GM10248 (cell line): ENCODE measurements at regions of chr16 and their contacts with region 1.

Region 1: DNA sequence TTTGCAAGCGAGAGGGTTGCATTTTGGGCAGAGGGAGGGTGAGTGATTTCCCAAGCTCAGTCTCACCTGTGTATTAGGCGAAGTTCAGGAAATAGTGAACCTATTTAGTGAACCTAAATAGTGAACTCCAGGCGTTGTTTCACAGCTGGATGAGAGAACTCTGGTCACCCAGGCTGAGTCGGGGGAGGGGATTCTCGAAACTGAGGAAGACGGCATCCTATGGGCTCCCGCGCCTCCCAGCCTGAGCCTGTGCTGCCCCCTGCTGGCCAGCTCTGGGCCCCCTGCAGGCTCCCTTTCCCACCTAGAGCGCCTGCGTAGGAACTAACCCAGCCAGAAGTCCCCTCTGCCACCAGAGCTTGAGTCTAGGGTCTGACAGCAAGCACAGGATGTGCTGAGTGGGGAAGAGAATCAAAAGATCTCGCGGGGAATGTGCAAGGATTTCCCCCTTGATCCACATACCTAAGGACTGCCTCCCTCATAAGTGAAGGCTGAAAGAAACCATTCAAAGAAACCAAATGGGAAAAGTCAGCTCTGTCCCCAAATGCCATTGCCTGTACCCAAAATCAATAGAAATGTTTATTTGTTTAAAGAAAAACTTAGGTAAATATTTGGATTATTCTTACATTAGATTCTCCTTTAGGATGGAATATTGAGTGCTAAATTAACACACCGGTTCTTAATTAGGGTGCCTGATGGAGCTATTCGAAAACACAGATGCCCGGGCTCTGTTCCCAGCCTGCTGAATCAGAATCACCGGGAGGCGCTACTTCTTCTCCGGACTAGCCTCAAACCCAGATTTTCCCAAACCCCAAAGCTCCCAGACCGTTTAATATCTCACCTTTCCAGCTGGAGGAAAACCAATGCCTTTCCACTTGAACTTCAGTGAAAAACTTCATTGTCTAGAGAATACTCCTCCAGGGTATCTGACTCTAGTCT is 14.8 kb upstream of the MARVELD3 start:
- DNase-seq: peak; percentile 85
- CTCF ChIP-seq: peak; percentile 94

Region 2: DNA sequence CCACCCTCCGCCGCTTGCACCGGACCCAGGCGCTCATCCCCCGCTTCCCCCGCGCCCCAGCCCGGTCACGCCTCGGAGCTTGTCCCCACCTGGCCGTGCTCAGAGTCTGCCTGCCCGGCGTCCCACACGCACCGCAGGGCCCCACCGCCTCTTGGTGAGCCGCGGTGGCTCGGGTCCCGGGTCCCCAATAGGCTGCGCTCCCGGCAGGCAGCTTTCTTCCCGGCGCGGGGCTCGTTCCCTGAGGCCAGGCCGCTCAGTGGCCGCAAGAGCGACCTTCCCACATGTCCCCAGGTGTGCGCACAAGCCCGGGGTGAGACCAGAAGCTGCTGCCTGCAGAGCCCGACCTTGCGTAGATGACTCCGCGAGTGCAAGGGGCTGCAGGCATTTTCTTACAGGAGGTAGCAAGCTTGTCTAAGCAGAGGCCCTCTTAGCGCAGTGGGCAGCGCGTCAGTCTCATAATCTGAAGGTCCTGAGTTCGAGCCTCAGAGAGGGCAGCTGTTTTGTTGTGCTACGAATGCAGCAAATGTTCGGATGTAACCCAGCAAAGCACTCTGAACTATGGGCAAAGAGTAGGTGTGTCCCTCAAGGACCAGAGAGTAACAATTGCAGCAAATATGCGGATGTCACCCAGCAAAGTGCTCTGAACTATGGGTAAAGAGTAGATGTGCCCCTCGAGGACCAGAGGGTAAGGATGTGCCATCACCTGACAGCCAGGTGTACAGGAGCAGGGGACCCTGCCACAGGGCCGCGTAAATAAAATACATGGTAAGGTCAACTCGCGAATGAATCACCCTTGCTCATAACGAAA is 184.9 kb before region 1 on chr16:
- CTCF ChIA-PET with region 1: interaction called, 10 read pairs
- POLR2A ChIA-PET with region 1: no interaction called
- DNase-seq: peak; percentile 46
- CTCF ChIP-seq: no peak

Region 3: DNA sequence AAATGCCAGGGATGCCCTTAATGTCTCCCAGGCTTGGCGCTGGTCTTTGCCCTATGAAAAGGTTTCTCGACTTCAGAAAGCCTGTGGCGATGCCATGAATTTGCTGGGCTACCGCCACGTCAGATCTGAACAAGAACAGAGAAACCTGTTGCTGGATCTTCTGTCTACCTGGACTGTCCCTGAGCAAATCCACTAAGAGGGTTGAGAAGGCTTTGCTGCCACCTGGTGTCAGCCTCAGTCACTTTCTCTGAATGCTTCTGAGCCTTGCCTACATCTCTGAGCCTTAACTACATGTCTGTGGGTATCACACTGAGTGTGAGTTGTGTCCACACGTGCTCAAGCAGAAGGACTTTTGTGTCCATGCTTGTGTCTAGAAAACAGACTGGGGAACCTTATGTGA is 73.6 kb before region 1 on chr16:
- CTCF ChIA-PET with region 1: interaction called, 35 read pairs
- POLR2A ChIA-PET with region 1: no interaction called
- DNase-seq: peak; percentile 67
- CTCF ChIP-seq: peak; percentile 79

Region 4: DNA sequence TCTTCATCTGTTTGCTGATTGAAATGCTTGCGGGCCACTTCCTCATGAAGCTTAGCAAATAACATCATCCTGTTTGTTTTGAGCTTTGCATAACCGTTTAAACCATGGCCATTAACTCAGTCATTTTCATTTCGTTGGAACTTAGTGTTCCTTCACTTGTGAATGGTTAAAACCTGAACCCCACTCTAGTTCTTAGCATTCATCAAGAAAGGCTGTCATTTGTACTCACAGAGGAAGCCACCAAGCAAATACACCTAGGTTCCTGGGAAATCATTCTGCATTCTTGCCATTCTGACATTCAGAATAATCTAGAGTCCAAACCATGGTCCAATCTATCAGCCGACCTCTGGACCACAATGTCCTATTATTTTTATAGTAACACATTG is 25.9 kb before region 1 on chr16:
- CTCF ChIA-PET with region 1: interaction called, 16 read pairs
- POLR2A ChIA-PET with region 1: no interaction called
- DNase-seq: no peak
- CTCF ChIP-seq: no peak

Region 5: DNA sequence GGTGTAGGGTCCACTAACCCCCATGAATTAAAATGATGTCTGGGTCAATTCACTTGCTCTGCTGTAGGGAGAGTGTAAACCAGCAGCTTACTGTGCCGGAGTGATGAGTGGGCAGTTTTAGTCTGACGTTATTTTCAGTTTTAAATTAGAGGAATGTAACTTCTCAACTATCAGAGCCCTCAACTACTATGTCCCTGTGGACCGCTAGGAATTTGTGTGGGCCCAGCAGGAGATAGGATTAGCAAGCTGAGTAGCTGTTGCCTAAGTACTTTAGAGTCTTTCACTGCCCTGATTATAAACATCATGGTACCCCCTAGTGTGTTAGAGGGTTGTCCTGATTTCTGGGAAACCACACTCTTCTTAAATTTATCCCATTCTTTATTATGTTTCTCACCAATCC is 26.2 kb after region 1 on chr16:
- CTCF ChIA-PET with region 1: interaction called, 14 read pairs
- POLR2A ChIA-PET with region 1: no interaction called
- DNase-seq: no peak
- CTCF ChIP-seq: no peak